ENCODE measurements at regions of chr10 and their contacts with region 1.

Region 1: GRCh38 chr10:52779541-52780390 is 7.2 kb upstream of the MBL2 start:
- DNase-seq: peak; percentile 62 to 77 (median 69)
- ATAC-seq: peak; percentile 91
- H3K4me3 ChIP-seq: no peak overlapping the region
- H3K27ac ChIP-seq: no peak overlapping the region
- H3K4me1 ChIP-seq: no peaks in the 10 kb centered on the region
- H3K27me3 ChIP-seq: no peaks in the 10 kb centered on the region
- CTCF ChIP-seq: peak; percentile 61 to 86 (median 77)
- EP300 ChIP-seq: no peak
- POLR2A ChIP-seq: no peak
- RAD21 ChIP-seq: peak; percentile 63 to 81

Region 2: DNA sequence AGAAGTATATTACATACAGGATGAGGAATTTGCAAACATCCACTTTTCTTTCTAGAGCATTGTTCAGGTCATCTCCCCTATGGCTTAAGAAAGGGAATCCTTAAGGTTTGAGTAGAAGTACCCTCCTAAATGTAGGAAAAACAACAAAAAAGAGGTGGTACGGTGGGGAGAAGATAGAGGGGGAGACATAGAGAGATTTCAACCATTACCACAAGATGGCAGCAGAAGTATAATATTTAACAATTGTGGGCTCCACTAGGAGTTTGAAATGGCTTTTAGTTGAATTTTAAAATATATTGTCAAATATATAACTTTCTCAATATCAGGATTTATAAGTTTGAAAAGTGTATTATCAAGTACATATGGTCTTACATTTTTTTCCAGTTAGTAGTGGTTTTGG is 1778.2 kb before region 1 on chr10:
- CTCF ChIA-PET with region 1: interaction called, 3 read pairs
- POLR2A ChIA-PET with region 1: no interaction called
- in situ Hi-C with region 1: no loop called
- intact Hi-C with region 1: loop called (anchors 10 kb)
- DNase-seq: peak in 3 of 4 experiments; percentile 18 to 32 (median 31)
- ATAC-seq: peak; percentile 86
- H3K4me3 ChIP-seq: no peak overlapping the region
- H3K27ac ChIP-seq: no peak overlapping the region
- H3K4me1 ChIP-seq: no peaks in the 10 kb centered on the region
- H3K27me3 ChIP-seq: no peaks in the 10 kb centered on the region
- CTCF ChIP-seq: peak; percentile 38 to 69 (median 55); a peak in 5 of 6 replicates
- EP300 ChIP-seq: no peak
- POLR2A ChIP-seq: no peak
- RAD21 ChIP-seq: peak; percentile 57 to 71

Region 3: GRCh38 chr10:52308251-52309031 is 471.3 kb before region 1 on chr10:
- CTCF ChIA-PET with region 1: no interaction called
- POLR2A ChIA-PET with region 1: no interaction called
- in situ Hi-C with region 1: no loop called
- intact Hi-C with region 1: loop called (anchors 5 kb)
- DNase-seq: peak in 2 of 4 experiments; percentile 25 to 37
- ATAC-seq: peak; percentile 39; the same call in 1 of the 3 replicates
- H3K4me3 ChIP-seq: no peak overlapping the region
- H3K27ac ChIP-seq: no peak overlapping the region
- H3K4me1 ChIP-seq: peaks cover 0 to 3% of the 10 kb centered on the region in 2 experiments; a peak in 1 of 5 replicates
- H3K27me3 ChIP-seq: no peaks in the 10 kb centered on the region
- CTCF ChIP-seq: peak in 2 of 3 experiments; percentile 42 to 45; a peak in 3 of 6 replicates
- EP300 ChIP-seq: no peak
- POLR2A ChIP-seq: no peak
- RAD21 ChIP-seq: peak; percentile 48 to 51; a peak in 3 of 4 replicates

Region 4: GRCh38 chr10:52644373-52645186 is 135.2 kb before region 1 on chr10:
- CTCF ChIA-PET with region 1: no interaction called
- POLR2A ChIA-PET with region 1: no interaction called
- in situ Hi-C with region 1: no loop called
- intact Hi-C with region 1: loop called (anchors 2 kb)
- DNase-seq: peak; percentile 11 to 26 (median 22)
- ATAC-seq: no peak
- H3K4me3 ChIP-seq: no peak overlapping the region
- H3K27ac ChIP-seq: no peak overlapping the region
- H3K4me1 ChIP-seq: no peaks in the 10 kb centered on the region
- H3K27me3 ChIP-seq: no peaks in the 10 kb centered on the region
- CTCF ChIP-seq: peak; percentile 14 to 48 (median 47); a peak in 3 of 6 replicates
- EP300 ChIP-seq: no peak
- POLR2A ChIP-seq: no peak
- RAD21 ChIP-seq: peak; percentile 41 to 54; a peak in 3 of 4 replicates

Region 5: DNA sequence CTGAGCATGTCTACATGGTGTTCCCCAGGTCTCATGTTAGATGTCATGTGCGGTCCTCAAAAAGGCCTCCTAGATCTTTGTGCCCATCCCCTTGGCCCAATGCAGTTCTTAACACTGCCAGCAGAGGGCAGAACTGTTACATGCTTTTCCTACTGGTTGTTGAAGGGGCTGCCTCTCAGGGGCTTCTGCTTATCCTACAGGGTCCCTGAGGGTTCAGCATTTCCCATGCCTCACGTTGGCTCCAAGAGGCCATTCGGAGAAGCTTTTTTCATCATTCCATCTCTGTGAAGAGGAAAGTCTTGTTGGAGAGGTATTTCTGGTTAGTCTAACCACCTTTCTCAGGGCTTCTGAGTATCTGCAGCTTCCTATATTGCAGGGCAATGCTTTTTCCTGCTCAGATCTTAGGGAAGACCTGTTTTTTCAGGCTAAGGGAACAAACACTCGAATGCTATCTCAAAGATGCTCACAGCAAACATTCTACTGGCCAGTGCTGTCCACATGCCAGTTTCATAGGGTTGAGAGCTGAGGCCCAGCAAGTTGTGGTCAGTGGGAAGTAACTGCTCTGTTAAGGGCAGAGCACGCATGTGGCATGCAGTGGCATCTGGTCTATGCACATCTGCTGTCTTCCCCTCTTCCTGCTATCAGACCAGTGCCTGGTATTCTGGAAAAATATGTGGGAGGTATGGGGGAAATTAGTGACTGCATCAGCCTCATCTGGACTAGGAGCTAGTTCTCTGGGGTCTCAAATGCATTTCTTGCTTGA is 38.7 kb before region 1 on chr10:
- CTCF ChIA-PET with region 1: no interaction called
- POLR2A ChIA-PET with region 1: no interaction called
- in situ Hi-C with region 1: no loop called
- intact Hi-C with region 1: loop called (anchors 5 kb)
- DNase-seq: peak; percentile 42 to 57 (median 52)
- ATAC-seq: peak; percentile 60; the same call in 2 of the 3 replicates
- H3K4me3 ChIP-seq: no peak overlapping the region
- H3K27ac ChIP-seq: no peak overlapping the region
- H3K4me1 ChIP-seq: no peaks in the 10 kb centered on the region
- H3K27me3 ChIP-seq: no peaks in the 10 kb centered on the region
- CTCF ChIP-seq: peak; percentile 34 to 82 (median 53); a peak in 5 of 6 replicates
- EP300 ChIP-seq: no peak
- POLR2A ChIP-seq: no peak
- RAD21 ChIP-seq: peak; percentile 17 to 45; a peak in 2 of 4 replicates

Region 6: GRCh38 chr10:52801947-52802346 is 22.2 kb after region 1 on chr10:
- CTCF ChIA-PET with region 1: no interaction called
- POLR2A ChIA-PET with region 1: no interaction called
- in situ Hi-C with region 1: no loop called
- intact Hi-C with region 1: no loop called
- DNase-seq: no peak
- ATAC-seq: no peak
- H3K4me3 ChIP-seq: no peak overlapping the region
- H3K27ac ChIP-seq: no peak overlapping the region
- H3K4me1 ChIP-seq: no peaks in the 10 kb centered on the region
- H3K27me3 ChIP-seq: no peaks in the 10 kb centered on the region
- CTCF ChIP-seq: no peak
- EP300 ChIP-seq: no peak
- POLR2A ChIP-seq: no peak
- RAD21 ChIP-seq: no peak